BJ (cell line): ENCODE measurements at regions of chr15 and their contacts with region 1.

Region 1: DNA sequence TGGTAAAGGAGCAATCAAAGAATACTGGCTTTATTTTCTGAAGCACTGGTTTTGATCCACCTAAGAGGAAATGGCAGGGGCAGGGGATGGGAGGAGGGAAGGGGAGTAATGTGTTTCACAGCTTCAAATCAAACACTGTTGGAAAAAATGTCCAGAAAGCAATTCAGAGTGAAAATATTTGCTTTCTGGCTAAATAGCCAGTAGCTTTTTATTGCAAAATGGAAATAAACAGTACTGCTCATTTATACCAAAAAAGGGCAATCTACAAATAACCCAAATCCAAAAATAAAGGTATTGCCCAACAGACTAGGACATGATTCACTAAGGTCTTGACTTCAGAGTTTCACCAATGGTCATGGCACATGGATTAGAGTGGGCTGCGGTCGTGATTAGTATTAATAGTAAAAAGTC is 279.3 kb upstream of the THBS1 start:
- DNase-seq: peak; percentile 88
- H3K4me3 ChIP-seq: no peak overlapping the region
- H3K27me3 ChIP-seq: no peaks in the 10 kb centered on the region
- CTCF ChIP-seq: no peak

Region 2: GRCh38 chr15:39171944-39172368 is 129.6 kb before region 1 on chr15:
- CTCF ChIA-PET with region 1: interaction called, 15 read pairs
- POLR2A ChIA-PET with region 1: interaction called, 3 read pairs
- DNase-seq: peak; percentile 86
- H3K4me3 ChIP-seq: no peak overlapping the region
- H3K27me3 ChIP-seq: no peaks in the 10 kb centered on the region
- CTCF ChIP-seq: peak; percentile 41

Region 3: DNA sequence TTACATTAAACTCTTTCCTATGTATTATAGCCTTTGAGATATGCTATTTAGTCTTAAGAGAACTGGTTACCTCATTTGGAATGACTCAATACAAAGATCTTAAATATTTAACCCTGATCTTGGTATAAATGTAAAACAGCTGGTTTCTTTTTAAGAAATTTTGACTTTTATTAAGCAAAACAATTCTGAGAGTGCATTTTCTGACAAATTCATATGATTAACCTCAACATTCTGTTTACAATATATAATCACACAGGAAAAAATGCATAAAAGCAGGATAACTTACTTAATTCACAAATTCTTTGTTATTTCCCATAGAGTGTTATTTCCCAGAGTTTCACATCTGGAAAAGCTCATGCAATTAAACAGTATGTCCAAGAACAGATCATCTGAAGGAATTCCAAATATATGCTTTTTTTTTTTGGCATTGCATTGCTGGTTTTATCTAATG is 121.1 kb before region 1 on chr15:
- CTCF ChIA-PET with region 1: interaction called, 3 read pairs
- POLR2A ChIA-PET with region 1: interaction called, 25 read pairs
- DNase-seq: peak; percentile 94
- H3K4me3 ChIP-seq: no peak overlapping the region
- H3K27me3 ChIP-seq: no peaks in the 10 kb centered on the region
- CTCF ChIP-seq: no peak

Region 4: GRCh38 chr15:39242345-39242744 is 59.2 kb before region 1 on chr15:
- CTCF ChIA-PET with region 1: no interaction called
- POLR2A ChIA-PET with region 1: interaction called, 16 read pairs
- DNase-seq: peak; percentile 77
- H3K4me3 ChIP-seq: no peak overlapping the region
- H3K27me3 ChIP-seq: no peaks in the 10 kb centered on the region
- CTCF ChIP-seq: no peak

Region 5: DNA sequence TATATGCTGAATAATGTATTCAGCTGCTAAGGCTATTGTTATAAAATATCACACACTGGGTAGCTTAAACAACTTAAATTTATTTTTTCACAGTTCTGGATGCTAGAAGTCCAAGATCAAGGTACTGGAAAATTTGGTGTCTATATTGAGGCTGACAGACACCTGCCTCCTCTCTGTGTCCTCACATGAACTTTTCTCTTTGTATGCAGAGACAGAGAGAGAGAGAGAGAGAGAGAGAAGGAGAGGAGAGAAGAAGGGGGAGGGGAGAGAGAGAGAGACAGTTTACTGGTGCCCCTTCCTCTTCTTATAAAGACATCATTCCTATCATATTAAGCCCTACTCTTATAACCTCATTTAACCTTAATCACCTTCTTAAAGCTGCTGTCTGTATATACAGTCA is 40.8 kb before region 1 on chr15:
- CTCF ChIA-PET with region 1: no interaction called
- POLR2A ChIA-PET with region 1: interaction called, 14 read pairs
- DNase-seq: no peak
- H3K4me3 ChIP-seq: no peak overlapping the region
- H3K27me3 ChIP-seq: no peaks in the 10 kb centered on the region
- CTCF ChIP-seq: no peak

Region 6: GRCh38 chr15:39283531-39283930 is 18.1 kb before region 1 on chr15:
- CTCF ChIA-PET with region 1: interaction called, 3 read pairs
- POLR2A ChIA-PET with region 1: interaction called, 10 read pairs
- DNase-seq: no peak
- H3K4me3 ChIP-seq: no peak overlapping the region
- H3K27me3 ChIP-seq: no peaks in the 10 kb centered on the region
- CTCF ChIP-seq: no peak

Region 7: GRCh38 chr15:39465843-39466749 is 164.5 kb after region 1 on chr15:
- CTCF ChIA-PET with region 1: no interaction called
- POLR2A ChIA-PET with region 1: interaction called, 21 read pairs
- DNase-seq: peak; percentile 94
- H3K4me3 ChIP-seq: no peak overlapping the region
- H3K27me3 ChIP-seq: no peaks in the 10 kb centered on the region
- CTCF ChIP-seq: no peak